Endothelial cell of umbilical vein (primary cell): ENCODE measurements at regions of chr1 and their contacts with region 1.

Region 1: GRCh38 chr1:204213668-204214662 is at the start of gene GOLT1A:
- DNase-seq: peak; percentile 75
- H3K4me3 ChIP-seq: no peak within 1 kb of the TSS
- H3K27ac ChIP-seq: no peak within 1 kb of the TSS
- H3K4me1 ChIP-seq: no peaks in the 10 kb centered on the region
- H3K27me3 ChIP-seq: no peaks in the 10 kb centered on the region
- CTCF ChIP-seq: peak; percentile 75
- POLR2A ChIP-seq: no peak
- total RNA-seq, gene GOLT1A: not detected in 2 replicates

Region 2: DNA sequence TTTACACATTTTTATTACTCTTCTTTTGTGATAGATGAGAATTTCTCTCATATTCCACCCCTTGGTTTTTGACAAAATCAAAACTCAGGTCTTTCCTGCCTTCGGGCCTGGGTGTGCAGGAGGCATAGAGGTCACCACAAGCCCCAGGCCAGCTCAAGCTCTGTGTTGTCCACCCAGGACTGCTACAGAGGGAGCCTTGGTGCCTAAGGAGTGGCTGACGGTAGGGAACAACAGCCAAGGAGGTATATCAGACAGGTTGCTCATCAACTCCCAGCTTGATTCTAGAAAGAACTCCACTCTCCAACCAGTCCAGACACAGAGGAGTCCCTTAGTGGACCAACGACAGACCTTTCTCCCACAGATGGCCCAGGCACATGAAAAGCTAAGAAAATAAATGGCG is 31.1 kb before region 1 on chr1:
- CTCF ChIA-PET with region 1: no interaction called
- POLR2A ChIA-PET with region 1: no interaction called
- dilution Hi-C with region 1: no loop called
- intact Hi-C with region 1: no loop called
- DNase-seq: no peak
- H3K4me3 ChIP-seq: no peak overlapping the region
- H3K27ac ChIP-seq: no peak overlapping the region
- H3K4me1 ChIP-seq: no peaks in the 10 kb centered on the region
- H3K27me3 ChIP-seq: no peaks in the 10 kb centered on the region
- CTCF ChIP-seq: no peak
- POLR2A ChIP-seq: no peak

Region 3: DNA sequence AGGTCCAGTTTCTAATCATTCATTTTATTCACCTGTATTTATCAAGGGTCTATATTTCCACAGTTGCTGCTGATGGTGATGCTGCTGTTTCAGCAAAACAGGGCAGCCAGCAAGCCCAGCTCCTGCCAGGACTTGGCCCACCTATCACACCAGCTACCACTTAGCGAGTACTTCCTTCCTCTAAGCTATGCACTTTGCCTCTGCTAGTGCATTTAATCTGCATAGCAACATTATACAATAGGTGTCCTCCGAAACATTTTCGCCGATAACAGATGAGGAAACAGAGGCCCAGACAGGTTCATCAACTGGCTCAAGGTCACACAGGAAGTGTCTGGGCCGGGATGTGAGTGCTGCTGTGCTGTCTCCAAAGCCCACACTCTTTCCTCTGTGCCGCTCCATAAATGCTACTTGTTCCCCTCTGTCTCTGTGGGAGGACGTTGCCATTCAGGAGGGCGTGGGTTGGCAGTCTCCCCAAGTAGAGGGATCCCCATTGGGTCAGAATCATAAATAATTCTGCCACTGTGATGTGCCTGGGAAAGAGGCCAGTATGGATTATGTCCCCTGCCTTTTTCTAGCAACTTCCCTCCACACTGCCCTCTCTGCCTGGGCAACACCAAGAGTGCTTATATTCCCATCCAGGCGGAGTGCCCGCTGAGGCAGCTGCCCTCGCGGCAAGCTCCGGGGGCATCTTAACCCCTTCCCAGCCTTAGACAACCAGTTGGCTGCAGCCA is 155.2 kb after region 1 on chr1:
- CTCF ChIA-PET with region 1: interaction called, 176 read pairs
- POLR2A ChIA-PET with region 1: no interaction called
- dilution Hi-C with region 1: no loop called
- intact Hi-C with region 1: no loop called
- DNase-seq: peak; percentile 57
- H3K4me3 ChIP-seq: no peak overlapping the region
- H3K27ac ChIP-seq: no peak overlapping the region
- H3K4me1 ChIP-seq: peaks cover 20% of the 10 kb centered on the region
- H3K27me3 ChIP-seq: no peaks in the 10 kb centered on the region
- CTCF ChIP-seq: no peak
- POLR2A ChIP-seq: no peak

Region 4: DNA sequence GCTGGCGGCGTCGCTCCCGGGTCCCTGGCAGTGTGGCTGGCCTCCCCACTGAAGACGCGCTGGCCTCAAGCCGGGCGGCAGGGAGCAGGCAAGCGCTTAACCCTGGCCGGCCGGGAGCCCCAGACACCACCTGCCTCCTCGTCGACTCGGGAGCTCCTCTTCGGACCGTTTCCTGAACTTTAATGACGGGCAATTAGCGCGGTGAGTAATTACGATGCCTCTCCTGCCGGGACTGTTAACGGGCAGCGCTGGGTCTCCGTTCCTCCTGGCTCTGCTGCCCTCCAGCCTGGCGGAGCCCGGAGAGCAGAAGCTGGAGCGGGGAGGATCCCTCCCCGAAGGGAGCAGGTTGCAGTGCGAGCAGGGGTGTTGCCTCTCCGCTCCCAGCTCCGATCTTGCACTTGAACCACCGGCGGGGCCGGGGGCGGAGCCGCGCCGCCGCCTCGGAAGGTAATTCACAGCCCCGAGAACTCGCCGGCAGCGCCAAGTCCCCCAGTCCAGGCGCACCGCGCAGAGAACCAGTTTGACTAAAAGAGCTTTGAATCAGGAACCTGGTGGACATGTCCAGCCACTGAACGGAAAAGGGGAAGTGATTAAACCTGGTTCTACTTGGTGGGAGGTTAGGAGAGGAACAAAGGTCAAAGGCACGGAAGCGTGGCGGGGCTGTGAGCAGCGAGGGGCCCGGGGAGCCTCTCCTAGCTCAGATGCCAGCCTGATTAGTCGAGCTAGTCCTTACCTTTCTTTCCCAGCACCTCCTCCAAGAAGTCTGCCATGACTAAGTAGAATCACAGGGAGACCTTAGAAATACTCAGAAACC is 164.0 kb after region 1 on chr1:
- CTCF ChIA-PET with region 1: interaction called, 10 read pairs
- POLR2A ChIA-PET with region 1: no interaction called
- dilution Hi-C with region 1: no loop called
- intact Hi-C with region 1: no loop called
- DNase-seq: peak; percentile 45
- H3K4me3 ChIP-seq: peak overlapping the region; percentile 47 to 68 (median 57)
- H3K27ac ChIP-seq: peak overlapping the region; percentile 33
- H3K4me1 ChIP-seq: peaks cover 21% of the 10 kb centered on the region
- H3K27me3 ChIP-seq: no peaks in the 10 kb centered on the region
- CTCF ChIP-seq: no peak
- POLR2A ChIP-seq: no peak